Activated CD4-positive, alpha-beta T cell treated with anti-CD3 and anti-CD28 coated beads for 36 hours (primary cell): ENCODE measurements at regions of chr1 and their contacts with region 1.

Region 1: DNA sequence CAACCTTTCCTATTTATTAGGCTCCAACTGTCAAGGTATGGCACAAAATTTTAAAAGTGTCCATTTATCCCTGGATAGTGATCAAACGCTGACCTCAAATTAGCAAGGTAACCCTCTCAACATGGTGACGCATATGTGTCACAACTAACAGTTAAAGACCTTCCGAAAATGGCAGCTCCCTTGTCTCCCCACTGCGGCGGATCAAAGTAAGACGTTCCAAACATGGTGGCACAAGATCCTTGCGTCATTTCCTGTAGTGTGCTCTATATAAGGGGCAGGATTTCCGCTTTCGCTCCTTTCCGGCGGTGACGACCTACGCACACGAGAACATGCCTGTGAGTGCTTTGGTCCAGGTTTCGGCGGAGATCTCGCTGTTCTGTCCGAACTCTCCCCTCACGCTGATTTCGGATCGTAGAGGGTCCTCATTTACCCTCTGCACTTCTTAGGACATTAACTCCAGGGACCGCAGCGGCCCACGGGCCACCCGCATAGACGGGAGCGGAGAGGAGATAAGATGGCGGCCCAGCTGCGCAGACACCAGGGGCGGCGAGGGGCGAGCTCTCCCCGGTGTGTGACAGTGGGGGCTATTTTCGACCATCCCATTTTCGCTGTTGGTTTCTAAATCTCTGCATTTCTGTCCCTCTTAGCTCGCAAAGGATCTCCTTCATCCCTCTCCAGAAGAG is at the start of gene RPS27:
- DNase-seq: peak; percentile 91
- ATAC-seq: peak; percentile 90
- H3K4me3 Mint-ChIP-seq: peak within 1 kb of the TSS; percentile 93
- H3K27ac Mint-ChIP-seq: peak within 1 kb of the TSS; percentile 96
- H3K4me1 Mint-ChIP-seq: peaks cover 49% of the 10 kb centered on the region
- H3K27me3 Mint-ChIP-seq: no peaks in the 10 kb centered on the region
- total RNA-seq, gene RPS27: 1,867 to 2,094 TPM

Region 2: GRCh38 chr1:153658400-153659174 is 332.0 kb before region 1 on chr1 and contains the start of gene SNAPIN:
- CTCF ChIA-PET with region 1: no interaction called
- POLR2A ChIA-PET with region 1: interaction called, 3 read pairs
- intact Hi-C with region 1: loop called in 1 of 2 experiments (anchors 1 kb)
- DNase-seq: peak; percentile 96
- ATAC-seq: peak; percentile 96
- H3K4me3 Mint-ChIP-seq: peak within 1 kb of the TSS; percentile 95
- H3K27ac Mint-ChIP-seq: peak within 1 kb of the TSS; percentile 90
- H3K4me1 Mint-ChIP-seq: peaks cover 13% of the 10 kb centered on the region
- H3K27me3 Mint-ChIP-seq: no peaks in the 10 kb centered on the region
- total RNA-seq, gene SNAPIN: 34.2 to 38.4 TPM

Region 3: DNA sequence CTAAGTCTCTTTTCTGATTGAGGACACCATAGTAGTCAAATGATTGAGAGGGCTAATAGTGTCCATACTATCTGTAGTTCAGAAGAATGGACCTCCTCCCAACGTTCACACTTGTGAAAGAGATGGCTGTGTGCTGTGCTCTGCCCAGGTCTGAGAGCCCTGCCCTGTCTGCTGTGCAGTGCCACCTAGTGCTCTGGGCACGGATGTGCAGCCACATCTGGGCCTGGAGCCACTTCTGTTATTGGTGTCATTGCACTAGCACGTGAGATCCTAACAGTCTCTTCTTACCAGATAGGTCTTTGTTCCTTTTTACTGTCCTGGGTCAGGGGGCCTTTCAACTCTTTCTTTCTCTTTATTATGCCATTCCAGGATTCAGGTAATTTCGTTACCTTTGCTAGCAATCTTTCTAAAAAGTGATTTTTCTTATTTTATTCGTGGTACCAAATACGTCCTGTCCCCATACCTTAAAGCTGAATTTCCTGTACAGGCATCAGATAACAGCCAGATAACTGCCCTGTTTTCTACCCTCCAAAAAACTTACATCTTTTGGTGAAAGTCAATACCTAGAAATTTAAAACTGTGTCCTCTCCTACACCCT is 241.1 kb before region 1 on chr1:
- CTCF ChIA-PET with region 1: interaction called, 4 read pairs
- POLR2A ChIA-PET with region 1: no interaction called
- intact Hi-C with region 1: loop called in 1 of 2 experiments (anchors 1 kb)
- DNase-seq: peak; percentile 89
- ATAC-seq: peak; percentile 100
- H3K4me3 Mint-ChIP-seq: no peak overlapping the region
- H3K27ac Mint-ChIP-seq: no peak overlapping the region
- H3K4me1 Mint-ChIP-seq: peaks cover 5% of the 10 kb centered on the region
- H3K27me3 Mint-ChIP-seq: no peaks in the 10 kb centered on the region

Region 4: DNA sequence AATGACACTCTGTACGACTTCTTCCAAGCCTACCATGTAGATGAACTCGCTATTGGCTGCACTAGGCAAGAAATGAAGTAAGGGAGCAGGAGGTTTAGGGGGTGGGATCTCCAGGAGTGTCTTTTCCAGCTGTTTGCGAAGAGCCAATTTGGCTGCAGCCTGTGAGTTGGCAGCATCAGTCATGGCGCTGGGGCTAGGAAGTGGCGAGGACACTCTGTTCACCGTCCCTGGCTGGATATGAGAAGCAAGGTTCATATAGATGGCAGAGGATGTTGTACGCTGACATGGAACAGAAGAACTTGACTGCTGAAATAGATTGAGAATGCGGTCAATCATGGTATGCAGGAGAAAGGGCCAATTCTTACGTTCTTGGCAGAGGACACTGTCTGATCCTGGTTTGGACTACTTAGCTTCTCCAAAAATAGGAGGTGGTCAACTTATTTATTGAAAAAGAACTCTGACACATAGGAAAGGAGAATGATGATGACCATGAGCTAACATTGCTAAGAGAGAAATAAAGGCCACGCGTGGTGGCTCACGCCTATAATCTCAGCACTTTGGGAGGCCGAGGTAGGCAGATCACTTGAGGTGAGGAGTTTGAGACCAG is 174.2 kb before region 1 on chr1:
- CTCF ChIA-PET with region 1: interaction called, 4 read pairs
- POLR2A ChIA-PET with region 1: interaction called, 3 read pairs
- intact Hi-C with region 1: loop called in 1 of 2 experiments (anchors 1 kb)
- DNase-seq: no peak
- ATAC-seq: no peak
- H3K4me3 Mint-ChIP-seq: no peak overlapping the region
- H3K27ac Mint-ChIP-seq: no peak overlapping the region
- H3K4me1 Mint-ChIP-seq: no peaks in the 10 kb centered on the region
- H3K27me3 Mint-ChIP-seq: no peaks in the 10 kb centered on the region

Region 5: DNA sequence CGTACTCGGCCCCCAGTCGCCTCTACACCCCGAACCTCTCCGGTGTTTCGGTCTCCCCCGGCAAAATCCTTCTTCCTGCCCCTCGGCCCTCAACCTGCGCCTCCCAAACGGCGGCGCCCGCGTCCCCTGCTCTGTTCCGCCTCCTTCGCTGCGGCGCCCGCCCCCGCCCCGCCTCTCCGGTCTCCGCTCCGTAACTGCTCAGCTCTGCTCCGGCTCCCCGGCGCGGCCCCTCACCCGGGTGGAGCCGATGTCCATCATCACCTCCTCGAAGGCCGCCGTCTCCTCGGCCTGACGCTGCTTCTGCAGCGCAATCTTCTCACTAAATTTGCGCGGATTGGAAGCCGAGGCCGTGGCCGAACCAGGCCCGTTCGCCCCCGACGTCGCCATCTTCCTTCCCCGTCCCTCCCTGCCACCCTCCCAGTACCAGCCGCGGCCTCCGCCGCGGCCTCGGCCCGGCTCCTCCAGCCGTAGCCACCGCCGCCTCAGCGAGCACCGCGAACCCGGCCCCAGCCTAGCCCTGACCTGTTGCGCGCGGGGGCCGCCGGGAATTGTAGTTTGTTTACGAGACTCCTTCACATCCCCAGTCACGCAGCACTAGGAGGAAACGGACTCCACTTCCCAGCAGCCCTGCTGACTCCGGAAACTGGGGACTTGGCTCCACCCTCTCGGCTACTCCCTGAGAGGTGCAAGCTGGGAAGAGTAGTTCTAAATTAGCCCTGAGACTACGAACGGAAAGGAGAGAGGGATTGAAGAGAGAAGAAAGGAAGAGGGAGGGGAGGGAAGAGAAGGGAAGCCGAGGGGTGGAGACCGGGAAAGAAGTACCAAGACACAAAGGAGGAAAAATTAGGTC is 32.3 kb before region 1 on chr1 and contains the start of gene CRTC2:
- CTCF ChIA-PET with region 1: interaction called, 12 read pairs
- POLR2A ChIA-PET with region 1: interaction called, 17 read pairs
- intact Hi-C with region 1: loop called (anchors 1 kb)
- DNase-seq: peak; percentile 99
- ATAC-seq: peak; percentile 90
- H3K4me3 Mint-ChIP-seq: peak within 1 kb of the TSS; percentile 99
- H3K27ac Mint-ChIP-seq: peak within 1 kb of the TSS; percentile 95
- H3K4me1 Mint-ChIP-seq: peaks cover 55% of the 10 kb centered on the region
- H3K27me3 Mint-ChIP-seq: no peaks in the 10 kb centered on the region
- total RNA-seq, gene CRTC2: 60.6 to 80.4 TPM

Region 6: DNA sequence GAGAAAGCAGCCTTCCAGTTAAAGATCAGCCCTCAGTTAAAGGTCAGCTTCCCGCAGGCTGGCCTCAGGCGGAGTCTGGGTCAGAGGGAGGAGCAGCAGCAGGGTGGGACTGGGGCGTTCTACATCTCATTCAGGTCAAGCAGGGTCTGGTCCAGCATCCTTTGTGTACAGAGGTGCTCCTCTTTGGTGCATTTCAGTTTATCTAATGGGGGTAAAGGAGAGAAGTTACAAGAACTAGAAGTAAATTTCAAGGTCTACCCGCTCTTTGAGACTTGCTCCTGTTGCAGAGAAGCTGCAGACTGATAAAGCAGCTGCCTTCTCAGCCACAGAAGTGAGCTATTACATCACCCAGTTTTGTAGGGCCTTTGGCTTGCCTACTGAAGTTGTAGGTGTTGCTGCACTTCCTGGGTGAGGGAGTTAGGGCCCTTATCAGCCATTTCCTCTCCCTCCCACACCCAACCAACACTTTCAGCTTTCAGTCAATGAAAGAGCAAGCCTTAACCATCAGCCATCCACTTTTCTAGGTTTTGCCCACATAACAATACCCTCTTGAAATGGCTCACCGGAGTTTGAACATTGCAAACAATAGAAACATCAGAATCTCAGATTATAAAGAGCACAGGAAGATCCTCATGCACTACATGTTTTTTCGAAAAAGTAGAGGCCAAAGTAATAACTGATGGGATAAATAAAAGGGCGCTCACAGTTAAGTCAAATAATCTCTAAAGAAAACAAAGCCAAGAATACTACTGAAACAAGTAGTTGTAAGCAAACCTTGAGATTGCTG is 167.1 kb after region 1 on chr1:
- CTCF ChIA-PET with region 1: interaction called, 3 read pairs
- POLR2A ChIA-PET with region 1: interaction called, 5 read pairs
- intact Hi-C with region 1: loop called (anchors 1 to 5 kb)
- DNase-seq: peak; percentile 83
- ATAC-seq: peak; percentile 98
- H3K4me3 Mint-ChIP-seq: peak overlapping the region; percentile 60
- H3K27ac Mint-ChIP-seq: peak overlapping the region; percentile 96
- H3K4me1 Mint-ChIP-seq: peaks cover 71% of the 10 kb centered on the region
- H3K27me3 Mint-ChIP-seq: no peaks in the 10 kb centered on the region

Region 7: DNA sequence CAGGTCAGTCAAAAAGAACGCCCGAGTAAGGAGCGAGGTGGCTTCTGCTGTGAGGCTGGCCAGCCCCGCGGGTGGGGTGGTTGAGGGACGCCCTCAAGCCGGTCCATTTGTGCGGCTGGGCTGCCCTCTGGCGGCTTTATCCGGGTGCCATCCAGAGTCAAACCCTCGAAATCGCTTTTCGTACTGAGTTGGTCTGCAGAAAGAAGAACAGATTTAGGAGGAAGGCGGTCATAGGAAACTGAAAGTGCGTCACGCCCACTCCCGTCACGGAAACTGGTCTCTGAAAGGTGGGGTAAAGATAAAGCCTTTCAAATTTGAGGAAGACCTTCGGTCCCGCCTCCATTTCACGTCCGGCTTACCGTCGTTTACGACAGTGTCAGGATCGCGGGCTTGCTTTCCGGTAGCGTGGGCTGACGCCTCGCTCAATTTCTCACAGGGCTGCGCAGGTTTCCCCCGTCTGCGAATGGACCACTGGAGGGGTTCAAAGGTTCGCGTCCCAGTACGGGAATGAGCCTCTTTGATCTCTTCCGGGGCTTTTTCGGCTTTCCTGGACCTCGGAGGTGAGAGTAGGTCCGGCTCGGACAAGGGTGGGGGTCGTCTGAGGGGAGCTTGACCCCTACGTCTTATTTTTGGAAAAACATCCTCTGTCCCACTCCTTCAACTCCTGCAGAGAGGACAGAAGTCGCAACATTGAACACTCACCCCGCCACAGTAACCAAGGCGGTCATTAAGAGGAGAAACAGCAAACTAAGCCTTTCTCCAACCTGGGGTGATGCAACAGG is 281.8 kb after region 1 on chr1 and contains the start of gene HAX1:
- CTCF ChIA-PET with region 1: no interaction called
- POLR2A ChIA-PET with region 1: no interaction called
- intact Hi-C with region 1: loop called (anchors 1 to 5 kb)
- DNase-seq: peak; percentile 99
- ATAC-seq: peak; percentile 95
- H3K4me3 Mint-ChIP-seq: peak within 1 kb of the TSS; percentile 99
- H3K27ac Mint-ChIP-seq: peak within 1 kb of the TSS; percentile 99
- H3K4me1 Mint-ChIP-seq: peaks cover 37% of the 10 kb centered on the region
- H3K27me3 Mint-ChIP-seq: no peaks in the 10 kb centered on the region
- total RNA-seq, gene HAX1: 177 to 225 TPM

Region 8: GRCh38 chr1:155295183-155295941 is 1304.8 kb after region 1 on chr1:
- CTCF ChIA-PET with region 1: no interaction called
- POLR2A ChIA-PET with region 1: no interaction called
- intact Hi-C with region 1: no loop called
- DNase-seq: no peak
- ATAC-seq: no peak
- H3K4me3 Mint-ChIP-seq: no peak overlapping the region
- H3K27ac Mint-ChIP-seq: no peak overlapping the region
- H3K4me1 Mint-ChIP-seq: peaks cover 3% of the 10 kb centered on the region
- H3K27me3 Mint-ChIP-seq: peaks cover 30% of the 10 kb centered on the region